ENCODE measurements at regions of chr2 and their contacts with region 1.

Region 1: GRCh38 chr2:31688282-31688681 is 107.5 kb upstream of the SRD5A2 start:
- DNase-seq: no peak
- ATAC-seq: no peak
- H3K4me3 ChIP-seq: no peak overlapping the region
- H3K27ac ChIP-seq: no peak overlapping the region
- H3K4me1 ChIP-seq: no peaks in the 10 kb centered on the region
- H3K27me3 ChIP-seq: no peaks in the 10 kb centered on the region
- CTCF ChIP-seq: peak; percentile 43 to 49 (median 48); a peak in 5 of 6 replicates
- EP300 ChIP-seq: no peak
- POLR2A ChIP-seq: no peak
- RAD21 ChIP-seq: 0 out of 2 replicates have a peak, but pooled peaks have one; percentile 38

Region 2: GRCh38 chr2:31660165-31660564 is 28.1 kb before region 1 on chr2:
- CTCF ChIA-PET with region 1: no interaction called
- POLR2A ChIA-PET with region 1: no interaction called
- RAD21 ChIA-PET with region 1: no interaction called
- SMC1A ChIA-PET with region 1: no interaction called
- in situ Hi-C with region 1: no loop called
- intact Hi-C with region 1: no loop called
- DNase-seq: no peak
- ATAC-seq: no peak
- H3K4me3 ChIP-seq: no peak overlapping the region
- H3K27ac ChIP-seq: no peak overlapping the region
- H3K4me1 ChIP-seq: no peaks in the 10 kb centered on the region
- H3K27me3 ChIP-seq: no peaks in the 10 kb centered on the region
- CTCF ChIP-seq: no peak
- EP300 ChIP-seq: no peak
- POLR2A ChIP-seq: no peak
- RAD21 ChIP-seq: no peak

Region 3: GRCh38 chr2:31831585-31831984 is 143.3 kb after region 1 on chr2:
- CTCF ChIA-PET with region 1: no interaction called
- POLR2A ChIA-PET with region 1: no interaction called
- RAD21 ChIA-PET with region 1: no interaction called
- SMC1A ChIA-PET with region 1: no interaction called
- in situ Hi-C with region 1: no loop called
- intact Hi-C with region 1: loop called (anchors 10 kb)
- DNase-seq: no peak
- ATAC-seq: no peak
- H3K4me3 ChIP-seq: no peak overlapping the region
- H3K27ac ChIP-seq: no peak overlapping the region
- H3K4me1 ChIP-seq: no peaks in the 10 kb centered on the region
- H3K27me3 ChIP-seq: no peaks in the 10 kb centered on the region
- CTCF ChIP-seq: no peak
- EP300 ChIP-seq: no peak
- POLR2A ChIP-seq: no peak
- RAD21 ChIP-seq: no peak